AG04449 (cell line): ENCODE measurements at regions of chr5 and their contacts with region 1.

Region 1: GRCh38 chr5:140157032-140157803 is 17.8 kb upstream of the CYSTM1 start:
- DNase-seq: no peak
- H3K4me3 ChIP-seq: peak overlapping the region; percentile 38
- CTCF ChIP-seq: peak; percentile 94

Region 2: DNA sequence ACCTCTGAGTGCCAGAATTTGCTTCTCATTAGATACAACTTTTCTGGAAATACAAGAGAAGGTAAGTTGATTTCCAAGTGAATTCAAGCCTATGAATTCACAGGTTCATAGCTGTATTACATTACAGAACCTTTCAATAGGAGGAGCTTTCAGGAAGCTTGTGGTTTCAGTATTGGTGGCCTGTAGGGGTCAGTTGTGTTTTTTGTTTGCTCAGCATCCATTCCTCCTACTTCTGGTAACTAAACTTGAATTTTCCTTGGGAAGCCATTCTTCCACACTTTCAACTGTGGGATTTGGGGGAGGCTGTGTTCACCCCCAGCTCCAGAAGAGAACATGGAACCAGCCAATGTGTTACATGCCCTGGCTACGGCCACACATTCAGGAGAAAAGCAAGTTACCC is 12.2 kb after region 1 on chr5:
- CTCF ChIA-PET with region 1: interaction called, 18 read pairs
- POLR2A ChIA-PET with region 1: no interaction called
- DNase-seq: no peak
- H3K4me3 ChIP-seq: no peak overlapping the region
- CTCF ChIP-seq: no peak

Region 3: GRCh38 chr5:140182803-140183367 is 25.7 kb after region 1 on chr5:
- CTCF ChIA-PET with region 1: no interaction called
- POLR2A ChIA-PET with region 1: no interaction called
- DNase-seq: no peak
- H3K4me3 ChIP-seq: no peak overlapping the region
- CTCF ChIP-seq: no peak